ENCODE measurements at regions of chr20 and their contacts with region 1.

Region 1: DNA sequence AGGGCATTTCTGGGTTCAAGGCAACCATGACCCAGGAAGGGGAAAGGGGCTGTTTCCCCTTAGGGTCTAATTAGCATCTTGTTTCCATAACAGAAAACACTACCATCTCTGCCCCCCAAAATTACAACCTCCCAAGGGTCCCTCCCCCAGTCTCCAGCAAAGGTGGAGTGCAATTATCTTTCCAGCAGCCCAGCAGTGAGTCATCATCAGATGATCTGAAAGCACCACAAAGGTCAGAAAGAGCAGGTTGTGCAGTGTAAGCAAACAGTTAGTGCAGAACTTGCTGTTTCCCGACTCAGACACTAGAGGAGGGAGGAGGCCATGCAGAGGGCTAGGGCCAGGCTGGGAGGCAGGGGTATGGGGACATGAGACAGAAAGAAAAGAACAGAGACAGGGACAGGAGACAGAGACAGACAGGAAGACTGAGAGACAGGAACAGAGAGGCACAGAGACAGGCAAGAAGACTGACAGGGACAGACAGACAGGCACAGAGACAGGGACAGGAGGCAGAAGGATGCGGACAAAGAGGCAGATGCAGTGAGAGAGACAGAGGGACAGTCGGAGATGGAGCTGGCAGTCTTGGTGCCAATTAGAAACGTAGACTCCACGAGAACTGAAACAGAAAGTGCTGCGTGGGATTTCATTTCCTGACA is 62.5 kb downstream of the PYGB start:
- DNase-seq: no peak
- H3K4me3 ChIP-seq: peak overlapping the region; percentile 24
- H3K27ac ChIP-seq: peak overlapping the region; percentile 52
- H3K4me1 ChIP-seq: peaks cover 29% of the 10 kb centered on the region
- H3K27me3 ChIP-seq: no peaks in the 10 kb centered on the region
- CTCF ChIP-seq: peak; percentile 45

Region 2: GRCh38 chr20:25178563-25179438 is 131.6 kb before region 1 on chr20:
- intact Hi-C with region 1: no loop called
- DNase-seq: no peak
- H3K4me3 ChIP-seq: no peak overlapping the region
- H3K27ac ChIP-seq: no peak overlapping the region
- H3K4me1 ChIP-seq: peaks cover 6% of the 10 kb centered on the region
- H3K27me3 ChIP-seq: no peaks in the 10 kb centered on the region
- CTCF ChIP-seq: peak; percentile 80

Region 3: GRCh38 chr20:25372584-25373336 is 62.4 kb after region 1 on chr20:
- intact Hi-C with region 1: loop called (anchors 10 kb)
- DNase-seq: no peak
- H3K4me3 ChIP-seq: no peak overlapping the region
- H3K27ac ChIP-seq: no peak overlapping the region
- H3K4me1 ChIP-seq: peaks cover 10% of the 10 kb centered on the region
- H3K27me3 ChIP-seq: no peaks in the 10 kb centered on the region
- CTCF ChIP-seq: no peak

Region 4: DNA sequence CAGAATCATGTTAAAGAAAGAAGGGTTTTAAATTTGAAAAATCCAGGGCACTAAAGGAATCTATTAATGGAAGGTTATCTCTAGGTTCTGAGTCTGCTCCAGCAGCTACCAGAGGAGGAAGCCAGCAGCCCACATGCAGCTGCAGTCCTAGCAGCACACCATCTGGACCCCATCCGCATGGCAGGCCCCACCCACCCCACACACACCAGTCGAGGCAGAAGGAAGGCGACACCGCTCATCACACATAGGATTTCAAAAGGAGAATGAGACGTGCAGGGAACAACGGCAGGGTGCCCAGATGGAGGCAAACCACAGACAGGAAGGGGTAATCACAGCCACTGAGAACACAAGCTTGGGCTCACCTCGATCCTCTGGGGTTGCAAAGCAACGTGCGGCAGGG is 176.0 kb after region 1 on chr20:
- intact Hi-C with region 1: no loop called
- DNase-seq: peak; percentile 44
- H3K4me3 ChIP-seq: no peak overlapping the region
- H3K27ac ChIP-seq: no peak overlapping the region
- H3K4me1 ChIP-seq: peaks cover 14% of the 10 kb centered on the region
- H3K27me3 ChIP-seq: no peaks in the 10 kb centered on the region
- CTCF ChIP-seq: no peak